Heart left ventricle (tissue), 16 donors: ENCODE measurements at regions of chr10 and their contacts with region 1.

Region 1: GRCh38 chr10:125060826-125061556 is 99.4 kb downstream of the CTBP2 start:
- DNase-seq: peak; percentile 84 to 91 (median 87)
- ATAC-seq: peak; percentile 39 to 71 (median 67)
- H3K4me3 ChIP-seq: peak overlapping the region in 8 of 12 donors; percentile 12 to 38 (median 25)
- H3K27ac ChIP-seq: peak overlapping the region; percentile 19 to 90 (median 70)
- H3K4me1 ChIP-seq: peaks cover 27 to 100% (median 98%) of the 10 kb centered on the region in 12 donors
- H3K27me3 ChIP-seq: no peaks in the 10 kb centered on the region
- CTCF ChIP-seq: peak; percentile 77 to 95 (median 88)
- POLR2A ChIP-seq: no peak

Region 2: GRCh38 chr10:124992462-124993344 is 68.3 kb before region 1 on chr10:
- intact Hi-C with region 1: loop called (anchors 2 to 10 kb)
- DNase-seq: peak in 4 of 5 donors; percentile 76 to 84 (median 82)
- ATAC-seq: peak; percentile 68 to 73 (median 71)
- H3K4me3 ChIP-seq: no peak overlapping the region
- H3K27ac ChIP-seq: peak overlapping the region in 4 of 12 donors; percentile 1 to 22 (median 14)
- H3K4me1 ChIP-seq: peaks cover 0 to 21% (median 5%) of the 10 kb centered on the region in 12 donors
- H3K27me3 ChIP-seq: no peaks in the 10 kb centered on the region
- CTCF ChIP-seq: peak; percentile 62 to 84 (median 81)
- POLR2A ChIP-seq: no peak

Region 3: GRCh38 chr10:125015312-125015944 is 45.6 kb before region 1 on chr10:
- intact Hi-C with region 1: loop called in 2 of 10 experiments (anchors 5 kb)
- DNase-seq: peak; percentile 57 to 77 (median 70)
- ATAC-seq: peak; percentile 27 to 65 (median 34)
- H3K4me3 ChIP-seq: peak overlapping the region in 1 of 12 donors; percentile 3
- H3K27ac ChIP-seq: peak overlapping the region; percentile 1 to 78 (median 70)
- H3K4me1 ChIP-seq: peaks cover 29 to 100% (median 89%) of the 10 kb centered on the region in 12 donors
- H3K27me3 ChIP-seq: no peaks in the 10 kb centered on the region
- CTCF ChIP-seq: no peak
- POLR2A ChIP-seq: no peak

Region 4: DNA sequence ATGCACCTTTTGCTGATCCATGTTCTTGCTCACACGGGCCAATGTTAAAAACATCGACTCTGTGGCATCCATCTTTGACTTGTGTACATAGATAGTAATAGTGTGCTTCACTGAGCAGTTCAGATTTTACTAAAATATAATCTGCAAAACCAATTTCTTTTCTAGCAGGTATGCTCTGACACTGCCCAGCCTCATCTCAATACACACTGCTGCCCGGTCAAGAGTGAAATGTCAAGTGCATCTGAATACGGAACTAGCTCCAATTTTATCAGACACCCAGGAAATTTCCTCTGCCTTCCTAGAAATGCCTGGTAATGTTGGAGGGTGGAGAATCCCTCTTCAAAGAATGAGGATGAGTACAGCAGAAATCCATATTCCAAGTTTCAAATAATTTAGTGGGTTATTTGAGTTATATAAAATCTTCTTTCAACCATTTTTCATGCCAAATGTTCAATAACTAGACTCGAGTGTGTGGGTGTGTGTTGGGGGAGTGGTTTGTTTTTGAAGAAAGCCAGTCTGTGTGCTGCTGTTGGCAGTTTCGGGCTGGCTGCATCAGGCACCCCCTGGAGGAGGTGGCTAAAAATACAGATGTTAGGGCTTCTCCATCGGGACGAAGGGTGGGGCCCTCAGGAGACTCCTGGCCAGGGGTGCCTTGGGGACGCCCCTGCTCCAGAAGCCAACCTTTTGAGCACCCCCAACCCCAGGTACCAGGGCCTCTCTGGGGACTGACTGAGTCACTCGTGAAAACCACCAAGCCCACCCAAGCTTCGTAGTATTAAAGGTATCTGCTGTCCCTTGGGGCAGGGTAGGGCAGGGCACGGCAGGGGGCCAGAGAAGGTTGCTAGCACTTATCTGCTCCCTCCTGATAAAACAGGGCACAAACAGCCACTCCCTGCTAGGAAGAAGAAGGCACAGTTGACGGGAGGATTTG is 84.0 kb after region 1 on chr10:
- intact Hi-C with region 1: loop called in 4 of 10 experiments (anchors 5 to 10 kb)
- DNase-seq: peak in 2 of 5 donors; percentile 62 to 65
- ATAC-seq: peak; percentile 48 to 65 (median 58)
- H3K4me3 ChIP-seq: peak overlapping the region in 5 of 12 donors; percentile 11 to 30 (median 18)
- H3K27ac ChIP-seq: peak overlapping the region in 10 of 12 donors; percentile 8 to 68 (median 42)
- H3K4me1 ChIP-seq: peaks cover 21 to 91% (median 71%) of the 10 kb centered on the region in 12 donors
- H3K27me3 ChIP-seq: no peaks in the 10 kb centered on the region
- CTCF ChIP-seq: peak; percentile 17 to 61 (median 46)
- POLR2A ChIP-seq: no peak